Heart left ventricle (tissue), 16 donors: ENCODE measurements at regions of chr12 and their contacts with region 1.

Region 1: DNA sequence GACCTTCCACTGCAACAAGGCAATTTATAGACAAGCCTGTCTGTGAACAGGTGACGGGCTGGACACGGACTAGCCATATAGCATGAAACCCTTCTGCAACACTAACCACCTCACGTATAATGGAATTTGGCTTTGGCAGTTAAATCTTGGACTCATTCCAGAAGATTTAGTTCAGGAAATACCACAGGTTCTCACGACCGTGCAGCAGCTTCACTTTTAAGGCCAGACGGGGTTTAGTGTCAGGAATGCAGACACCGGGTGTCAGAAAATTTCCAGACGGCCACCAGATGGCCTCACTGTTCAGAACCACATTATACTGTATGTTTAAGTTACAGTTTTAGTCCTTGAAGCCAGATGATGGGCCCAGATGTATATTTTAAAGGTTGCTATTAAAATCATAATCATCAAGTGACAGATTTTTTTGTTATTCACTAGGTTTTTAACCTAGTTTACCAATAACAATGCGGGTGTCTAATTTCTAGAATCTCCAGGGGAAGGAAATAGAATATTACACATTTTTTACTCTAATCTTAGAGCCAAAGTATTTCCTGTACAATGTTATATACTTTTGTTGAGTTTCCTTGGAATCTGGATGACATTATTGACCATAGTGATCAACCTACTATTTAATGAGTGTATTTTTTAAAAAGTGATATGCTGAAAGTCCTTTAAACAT is 90.5 kb upstream of the TMPO start:
- DNase-seq: peak in 4 of 5 donors; percentile 45 to 63 (median 54)
- ATAC-seq: peak in 3 of 4 donors; percentile 59 to 74 (median 73)
- H3K4me3 ChIP-seq: no peak overlapping the region
- H3K27ac ChIP-seq: no peak overlapping the region
- H3K4me1 ChIP-seq: peaks cover 0 to 13% (median 7%) of the 10 kb centered on the region in 12 donors
- H3K27me3 ChIP-seq: no peaks in the 10 kb centered on the region
- CTCF ChIP-seq: peak; percentile 57 to 81 (median 70)
- POLR2A ChIP-seq: no peak

Region 2: GRCh38 chr12:97368455-97369163 is 1056.3 kb before region 1 on chr12:
- intact Hi-C with region 1: no loop called
- DNase-seq: no peak
- ATAC-seq: no peak
- H3K4me3 ChIP-seq: no peak overlapping the region
- H3K27ac ChIP-seq: no peak overlapping the region
- H3K4me1 ChIP-seq: no peaks in the 10 kb centered on the region
- H3K27me3 ChIP-seq: no peaks in the 10 kb centered on the region
- CTCF ChIP-seq: no peak
- POLR2A ChIP-seq: no peak

Region 3: DNA sequence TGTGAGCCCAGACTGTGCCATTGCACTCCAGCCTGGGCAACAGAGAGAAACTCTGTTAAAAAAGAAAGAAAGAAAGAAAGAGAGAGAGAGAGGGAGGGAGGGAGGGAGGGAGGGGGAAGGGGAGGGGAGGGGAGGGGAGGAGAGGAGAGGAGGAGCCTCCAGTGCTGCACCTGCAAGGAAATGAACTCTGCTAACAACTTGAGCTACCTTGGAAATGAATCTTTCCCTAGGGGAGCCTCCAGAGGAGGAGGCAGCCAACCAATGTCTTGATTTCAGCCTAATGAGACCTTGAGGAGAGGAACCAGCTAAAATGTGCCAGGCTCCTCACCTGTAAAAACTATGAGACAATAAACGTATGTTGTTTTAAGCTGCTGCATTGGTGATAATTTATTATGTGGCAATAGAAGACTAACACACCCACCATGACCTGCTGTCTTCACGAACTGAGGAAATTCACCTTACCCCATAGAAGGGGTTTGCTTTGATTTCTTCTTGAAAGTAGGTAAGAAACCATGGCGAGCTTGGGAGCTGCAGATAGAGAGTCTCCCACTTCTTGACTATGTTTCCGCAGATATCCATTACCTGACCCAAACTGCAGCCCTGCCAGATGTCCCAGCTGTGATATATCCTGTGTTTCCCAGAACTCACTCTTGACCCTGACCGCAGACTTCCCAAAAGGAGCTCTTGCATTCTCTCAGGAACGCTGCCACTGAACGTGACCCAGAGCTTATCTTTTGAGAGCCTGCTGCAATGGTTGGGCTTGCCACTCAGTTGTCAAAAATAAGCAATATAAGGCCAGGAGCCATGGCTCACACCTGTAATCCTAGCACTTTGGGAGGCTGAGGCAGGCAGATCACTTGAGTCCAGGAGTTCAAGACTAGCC is 59.0 kb after region 1 on chr12:
- intact Hi-C with region 1: loop called in 2 of 10 experiments (anchors 5 to 10 kb)
- DNase-seq: no peak
- ATAC-seq: no peak
- H3K4me3 ChIP-seq: no peak overlapping the region
- H3K27ac ChIP-seq: no peak overlapping the region
- H3K4me1 ChIP-seq: no peaks in the 10 kb centered on the region
- H3K27me3 ChIP-seq: no peaks in the 10 kb centered on the region
- CTCF ChIP-seq: no peak
- POLR2A ChIP-seq: no peak

Region 4: GRCh38 chr12:98516184-98516873 is 91.5 kb after region 1 on chr12:
- intact Hi-C with region 1: loop called in 9 of 10 experiments (anchors 2 to 5 kb)
- DNase-seq: peak; percentile 60 to 80 (median 76)
- ATAC-seq: peak; percentile 36 to 66 (median 42)
- H3K4me3 ChIP-seq: peak overlapping the region; percentile 65 to 99 (median 96)
- H3K27ac ChIP-seq: peak overlapping the region; percentile 89 to 98 (median 94)
- H3K4me1 ChIP-seq: peaks cover 0 to 52% (median 23%) of the 10 kb centered on the region in 12 donors
- H3K27me3 ChIP-seq: no peaks in the 10 kb centered on the region
- CTCF ChIP-seq: peak; percentile 55 to 90 (median 76)
- POLR2A ChIP-seq: no peak

Region 5: GRCh38 chr12:98653866-98654493 is 229.1 kb after region 1 on chr12:
- intact Hi-C with region 1: loop called in 3 of 10 experiments (anchors 10 kb)
- DNase-seq: no peak
- ATAC-seq: no peak
- H3K4me3 ChIP-seq: no peak overlapping the region
- H3K27ac ChIP-seq: no peak overlapping the region
- H3K4me1 ChIP-seq: no peaks in the 10 kb centered on the region
- H3K27me3 ChIP-seq: no peaks in the 10 kb centered on the region
- CTCF ChIP-seq: peak; percentile 42 to 72 (median 57)
- POLR2A ChIP-seq: no peak